CD4-positive, alpha-beta memory T cell (primary cell): ENCODE measurements at regions of chr6 and their contacts with region 1.

Region 1: GRCh38 chr6:139291813-139292619 is at the start of gene TXLNB:
- DNase-seq: peak; percentile 81 to 95 (median 89)
- H3K4me3 ChIP-seq: peak within 1 kb of the TSS; percentile 26 to 42
- H3K4me3 Mint-ChIP-seq: peak within 1 kb of the TSS; percentile 79 to 91 (median 85)
- H3K27ac ChIP-seq: peak within 1 kb of the TSS; percentile 59
- H3K27ac Mint-ChIP-seq: peak within 1 kb of the TSS; percentile 94 to 99 (median 97)
- H3K4me1 ChIP-seq: peaks cover 59% of the 10 kb centered on the region
- H3K4me1 Mint-ChIP-seq: peaks cover 44 to 76% (median 58%) of the 10 kb centered on the region in 4 donors
- H3K27me3 ChIP-seq: no peaks in the 10 kb centered on the region
- H3K27me3 Mint-ChIP-seq: no peaks in the 10 kb centered on the region
- total RNA-seq, gene TXLNB: 1.4 to 1.6 TPM

Region 2: GRCh38 chr6:139124887-139125672 is 166.9 kb before region 1 on chr6:
- CTCF ChIA-PET with region 1: interaction called, 3 read pairs
- POLR2A ChIA-PET with region 1: interaction called, 30 read pairs
- intact Hi-C with region 1: loop called (anchors 1 kb)
- DNase-seq: peak; percentile 85 to 88 (median 86)
- H3K4me3 ChIP-seq: peak overlapping the region in 1 of 2 donors; percentile 34
- H3K4me3 Mint-ChIP-seq: peak overlapping the region; percentile 57 to 80 (median 71)
- H3K27ac ChIP-seq: peak overlapping the region; percentile 55
- H3K27ac Mint-ChIP-seq: peak overlapping the region; percentile 79 to 98 (median 94)
- H3K4me1 ChIP-seq: peaks cover 55% of the 10 kb centered on the region
- H3K4me1 Mint-ChIP-seq: peaks cover 43 to 63% (median 51%) of the 10 kb centered on the region in 4 donors
- H3K27me3 ChIP-seq: no peaks in the 10 kb centered on the region
- H3K27me3 Mint-ChIP-seq: no peaks in the 10 kb centered on the region

Region 3: DNA sequence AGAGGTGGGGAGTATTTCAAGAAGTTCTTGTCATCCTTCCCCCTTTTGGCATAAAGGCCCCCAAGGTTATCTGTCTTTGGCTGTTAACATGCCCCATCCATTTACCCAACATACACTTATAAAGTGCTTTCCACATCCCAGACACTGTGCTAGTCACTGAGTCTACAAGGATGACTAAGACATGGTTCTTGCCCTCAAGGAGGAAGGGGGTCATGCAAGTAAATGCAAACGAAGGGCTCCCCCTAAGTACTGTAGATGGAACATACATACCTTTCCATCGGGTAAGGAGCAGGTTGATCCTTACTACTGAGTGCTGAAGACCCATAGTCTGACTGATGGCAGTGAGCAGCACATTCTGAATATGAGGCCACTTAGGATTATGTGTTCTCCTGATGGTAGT is 118.8 kb before region 1 on chr6:
- CTCF ChIA-PET with region 1: interaction called, 5 read pairs
- POLR2A ChIA-PET with region 1: interaction called, 3 read pairs
- intact Hi-C with region 1: loop called (anchors 5 kb)
- DNase-seq: peak in 3 of 5 donors; percentile 24 to 61 (median 25)
- H3K4me3 ChIP-seq: no peak overlapping the region
- H3K4me3 Mint-ChIP-seq: peak overlapping the region in 7 of 8 donors; percentile 20 to 69 (median 53)
- H3K27ac ChIP-seq: no peak overlapping the region
- H3K27ac Mint-ChIP-seq: peak overlapping the region; percentile 29 to 88 (median 77)
- H3K4me1 ChIP-seq: peaks cover 97% of the 10 kb centered on the region
- H3K4me1 Mint-ChIP-seq: peaks cover 81 to 93% (median 89%) of the 10 kb centered on the region in 4 donors
- H3K27me3 ChIP-seq: no peaks in the 10 kb centered on the region
- H3K27me3 Mint-ChIP-seq: no peaks in the 10 kb centered on the region

Region 4: GRCh38 chr6:139256087-139256486 is 35.9 kb before region 1 on chr6:
- CTCF ChIA-PET with region 1: interaction called, 27 read pairs
- POLR2A ChIA-PET with region 1: interaction called, 54 read pairs
- intact Hi-C with region 1: loop called (anchors 2 kb)
- DNase-seq: no peak
- H3K4me3 ChIP-seq: no peak overlapping the region
- H3K4me3 Mint-ChIP-seq: peak overlapping the region in 1 of 8 donors; percentile 17
- H3K27ac ChIP-seq: no peak overlapping the region
- H3K27ac Mint-ChIP-seq: peak overlapping the region in 6 of 7 donors; percentile 62 to 94 (median 82)
- H3K4me1 ChIP-seq: peaks cover 55% of the 10 kb centered on the region
- H3K4me1 Mint-ChIP-seq: peaks cover 46 to 61% (median 50%) of the 10 kb centered on the region in 4 donors
- H3K27me3 ChIP-seq: no peaks in the 10 kb centered on the region
- H3K27me3 Mint-ChIP-seq: no peaks in the 10 kb centered on the region

Region 5: DNA sequence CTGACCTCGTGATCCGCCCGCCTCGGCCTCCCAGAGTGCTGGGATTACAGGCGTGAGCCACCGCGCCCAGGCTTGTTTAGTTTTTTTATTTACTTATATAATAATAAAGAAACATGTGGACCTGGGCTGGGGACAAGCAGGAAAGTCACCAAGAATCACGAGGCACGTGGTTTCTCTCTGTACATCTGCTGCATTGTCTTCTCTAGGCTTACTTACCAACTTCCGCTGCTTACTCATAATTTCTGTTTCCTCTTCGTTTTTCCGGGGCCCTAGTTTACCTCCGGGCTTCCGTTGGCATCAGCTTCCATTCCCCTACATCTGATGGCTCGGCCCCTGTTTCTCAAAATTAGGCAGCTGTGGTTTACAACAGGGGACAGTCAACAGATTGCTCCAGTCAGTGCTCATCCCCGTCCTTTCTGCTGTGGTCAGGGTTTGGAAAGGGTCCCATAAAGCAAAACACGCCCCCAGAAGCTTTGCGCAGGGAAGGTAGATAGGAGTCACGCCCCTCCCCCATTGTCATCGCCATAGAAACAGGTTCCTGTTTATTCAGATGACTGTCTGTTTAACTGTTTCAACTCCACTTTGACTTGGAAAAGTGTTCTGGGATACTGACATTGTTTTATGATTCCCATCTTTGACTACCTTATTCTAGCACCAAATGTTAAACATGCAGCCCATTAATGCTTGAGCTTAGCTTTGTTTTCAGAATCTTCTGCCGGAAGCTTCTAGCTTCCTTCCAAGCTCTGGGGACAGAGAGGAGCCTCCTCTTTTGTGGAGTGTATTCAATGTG is 31.7 kb after region 1 on chr6:
- CTCF ChIA-PET with region 1: interaction called, 24 read pairs
- POLR2A ChIA-PET with region 1: interaction called, 172 read pairs
- intact Hi-C with region 1: loop called (anchors 1 kb)
- DNase-seq: peak; percentile 86 to 91 (median 89)
- H3K4me3 ChIP-seq: peak overlapping the region; percentile 33 to 61
- H3K4me3 Mint-ChIP-seq: peak overlapping the region; percentile 78 to 92 (median 88)
- H3K27ac ChIP-seq: peak overlapping the region; percentile 87
- H3K27ac Mint-ChIP-seq: peak overlapping the region; percentile 98 to 100 (median 98)
- H3K4me1 ChIP-seq: peaks cover 35% of the 10 kb centered on the region
- H3K4me1 Mint-ChIP-seq: peaks cover 21 to 43% (median 34%) of the 10 kb centered on the region in 4 donors
- H3K27me3 ChIP-seq: no peaks in the 10 kb centered on the region
- H3K27me3 Mint-ChIP-seq: no peaks in the 10 kb centered on the region